GM10248 (cell line): ENCODE measurements at regions of chr3 and their contacts with region 1.

Region 1: GRCh38 chr3:36868614-36869436 is 76.0 kb downstream of the TRANK1 start:
- DNase-seq: peak; percentile 57
- CTCF ChIP-seq: peak; percentile 76

Region 2: GRCh38 chr3:36729204-36730056 is 139.4 kb before region 1 on chr3:
- CTCF ChIA-PET with region 1: interaction called, 13 read pairs
- POLR2A ChIA-PET with region 1: no interaction called
- DNase-seq: peak; percentile 41
- CTCF ChIP-seq: peak; percentile 62

Region 3: GRCh38 chr3:36734742-36735141 is 134.1 kb before region 1 on chr3:
- CTCF ChIA-PET with region 1: interaction called, 13 read pairs
- POLR2A ChIA-PET with region 1: no interaction called
- DNase-seq: no peak
- CTCF ChIP-seq: no peak

Region 4: DNA sequence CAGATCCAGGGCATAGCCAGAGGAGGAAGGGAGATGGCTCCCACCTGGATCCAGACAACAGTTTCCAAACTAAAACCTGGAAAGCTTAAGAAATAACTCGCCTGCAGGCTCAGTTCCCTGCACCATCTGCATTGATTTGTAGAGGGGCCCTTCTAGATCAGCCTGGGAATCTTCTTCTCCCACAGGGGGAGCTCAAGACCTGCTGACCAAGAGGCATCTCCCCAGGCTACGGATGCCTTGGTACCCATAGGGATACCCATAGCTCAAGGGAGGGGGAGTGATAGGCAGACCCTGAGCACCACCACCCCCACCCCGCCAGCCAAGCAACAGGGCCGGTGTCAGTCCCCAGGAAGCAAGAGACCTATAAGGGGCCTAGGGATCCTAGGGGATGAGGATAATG is 76.5 kb before region 1 on chr3:
- CTCF ChIA-PET with region 1: interaction called, 17 read pairs
- POLR2A ChIA-PET with region 1: no interaction called
- DNase-seq: peak; percentile 31
- CTCF ChIP-seq: peak; percentile 51

Region 5: GRCh38 chr3:36893137-36893557 is 24.3 kb after region 1 on chr3:
- CTCF ChIA-PET with region 1: interaction called, 26 read pairs
- POLR2A ChIA-PET with region 1: interaction called, 3 read pairs
- DNase-seq: peak; percentile 45
- CTCF ChIP-seq: no peak